Ascending aorta (tissue), 2 donors: ENCODE measurements at regions of chr16 and their contacts with region 1.

Region 1: DNA sequence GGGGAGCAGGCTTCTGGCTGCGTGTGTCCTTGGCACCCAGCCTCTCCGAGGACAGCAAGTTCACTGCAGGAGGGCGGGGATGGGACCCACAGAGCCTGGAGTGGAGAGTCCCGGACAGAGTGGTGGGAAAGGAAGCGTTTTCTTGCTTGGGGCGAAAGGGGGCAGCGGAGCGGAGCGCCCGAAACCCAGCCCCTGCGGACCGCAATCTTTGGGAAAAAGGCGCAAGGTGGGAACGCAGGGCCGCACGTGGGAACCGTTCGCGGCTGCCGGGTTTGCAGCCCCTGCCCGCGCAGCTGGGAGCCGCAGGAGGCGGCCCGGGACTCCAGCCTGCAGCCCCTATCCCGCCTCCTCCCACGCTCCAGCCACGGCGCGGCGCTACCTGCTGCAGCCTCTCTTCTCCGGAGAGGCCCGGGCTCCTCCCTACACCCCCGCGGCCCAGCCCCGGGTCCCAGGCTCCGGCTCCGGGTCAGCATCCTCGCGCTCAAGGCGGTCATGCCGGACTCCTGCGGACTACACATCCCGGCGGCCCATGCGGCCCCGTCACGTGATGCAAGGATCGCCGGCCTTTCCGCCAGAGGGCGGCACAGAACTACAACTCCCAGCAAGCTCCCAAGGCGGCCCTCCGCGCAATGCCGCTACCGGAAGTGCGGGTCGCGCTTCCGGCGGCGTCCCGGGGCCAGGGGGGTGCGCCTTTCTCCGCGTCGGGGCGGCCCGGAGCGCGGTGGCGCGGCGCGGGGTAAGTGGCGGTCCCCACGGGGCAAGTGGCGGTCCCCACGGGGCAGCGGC is at the starts of genes NTHL1 and TSC2:
- DNase-seq: peak; percentile 88 to 98
- H3K4me3 ChIP-seq: peak within 1 kb of the TSS; percentile 94 to 98
- H3K27ac ChIP-seq: peak within 1 kb of the TSS; percentile 62 to 63
- H3K4me1 ChIP-seq: peaks cover 4 to 20% of the 10 kb centered on the region in 2 donors
- H3K27me3 ChIP-seq: no peaks in the 10 kb centered on the region
- CTCF ChIP-seq: peak in 2 of 3 experiments; percentile 23 to 43
- total RNA-seq, gene NTHL1: 59.5 TPM
- total RNA-seq, gene TSC2: 258 TPM

Region 2: GRCh38 chr16:2003827-2004641 is 43.5 kb before region 1 on chr16:
- intact Hi-C with region 1: no loop called
- DNase-seq: peak in 1 of 2 donors; percentile 85
- H3K4me3 ChIP-seq: peak overlapping the region in 1 of 2 donors; percentile 25
- H3K27ac ChIP-seq: no peak overlapping the region
- H3K4me1 ChIP-seq: peaks cover 17 to 28% of the 10 kb centered on the region in 2 donors
- H3K27me3 ChIP-seq: no peaks in the 10 kb centered on the region
- CTCF ChIP-seq: peak; percentile 70 to 83 (median 81)

Region 3: GRCh38 chr16:2035431-2036220 is 11.9 kb before region 1 on chr16:
- intact Hi-C with region 1: loop called (anchors 1 kb)
- DNase-seq: peak in 1 of 2 donors; percentile 85
- H3K4me3 ChIP-seq: peak overlapping the region; percentile 47 to 53
- H3K27ac ChIP-seq: peak overlapping the region; percentile 83 to 96
- H3K4me1 ChIP-seq: peaks cover 23 to 46% of the 10 kb centered on the region in 2 donors
- H3K27me3 ChIP-seq: no peaks in the 10 kb centered on the region
- CTCF ChIP-seq: no peak

Region 4: DNA sequence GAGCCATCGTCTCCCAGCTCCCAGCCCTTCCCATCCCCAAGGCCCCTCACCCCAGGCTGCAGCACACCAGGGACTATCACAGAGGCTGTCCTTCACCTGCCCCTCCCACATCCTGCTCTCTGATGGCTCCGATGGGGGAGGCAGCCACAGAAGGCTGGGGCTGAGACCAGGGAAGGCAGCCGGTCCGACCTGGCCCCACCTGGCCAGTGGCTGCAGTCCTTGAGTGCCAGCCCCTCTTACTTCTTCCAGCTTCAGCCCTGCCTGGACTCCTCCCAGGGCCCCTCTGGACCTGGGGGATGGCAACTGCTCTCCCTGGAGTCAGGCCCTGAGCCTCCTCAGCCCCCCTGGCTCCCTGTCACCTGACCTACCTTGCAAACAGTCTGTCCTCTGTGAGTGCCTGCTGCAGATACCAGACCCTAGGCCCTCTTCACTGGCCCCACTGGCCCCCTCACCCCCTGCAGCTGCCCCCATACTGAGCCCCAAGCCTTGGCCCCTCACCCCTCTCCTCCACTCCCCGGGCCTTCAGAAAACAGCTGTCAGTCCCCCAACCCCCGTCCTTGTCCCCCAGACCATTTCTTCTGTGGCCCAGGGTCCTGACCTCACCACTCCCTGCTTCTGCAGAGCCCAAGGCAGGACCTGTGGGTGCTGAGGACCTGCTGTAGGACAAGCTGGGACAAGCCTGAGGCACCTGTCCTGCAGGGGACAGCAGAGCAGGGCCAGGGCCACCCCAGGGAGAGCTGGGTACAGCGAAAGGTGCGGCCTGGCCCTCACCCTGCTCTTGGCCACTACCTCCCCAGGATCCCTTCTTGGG is 692.3 kb after region 1 on chr16:
- intact Hi-C with region 1: no loop called
- DNase-seq: no peak
- H3K4me3 ChIP-seq: no peak overlapping the region
- H3K27ac ChIP-seq: no peak overlapping the region
- H3K4me1 ChIP-seq: no peaks in the 10 kb centered on the region
- H3K27me3 ChIP-seq: no peaks in the 10 kb centered on the region
- CTCF ChIP-seq: no peak